Ovary (tissue), 10 donors: ENCODE measurements at regions of chr7 and their contacts with region 1.

Region 1: GRCh38 chr7:104156842-104157277 is 51.0 kb downstream of the ORC5 start:
- DNase-seq: no peak
- H3K4me3 ChIP-seq: no peak overlapping the region
- H3K27ac ChIP-seq: no peak overlapping the region
- H3K4me1 ChIP-seq: no peaks in the 10 kb centered on the region
- H3K27me3 ChIP-seq: no peaks in the 10 kb centered on the region
- CTCF ChIP-seq: no peak
- EP300 ChIP-seq: no peak
- POLR2A ChIP-seq: no peak

Region 2: DNA sequence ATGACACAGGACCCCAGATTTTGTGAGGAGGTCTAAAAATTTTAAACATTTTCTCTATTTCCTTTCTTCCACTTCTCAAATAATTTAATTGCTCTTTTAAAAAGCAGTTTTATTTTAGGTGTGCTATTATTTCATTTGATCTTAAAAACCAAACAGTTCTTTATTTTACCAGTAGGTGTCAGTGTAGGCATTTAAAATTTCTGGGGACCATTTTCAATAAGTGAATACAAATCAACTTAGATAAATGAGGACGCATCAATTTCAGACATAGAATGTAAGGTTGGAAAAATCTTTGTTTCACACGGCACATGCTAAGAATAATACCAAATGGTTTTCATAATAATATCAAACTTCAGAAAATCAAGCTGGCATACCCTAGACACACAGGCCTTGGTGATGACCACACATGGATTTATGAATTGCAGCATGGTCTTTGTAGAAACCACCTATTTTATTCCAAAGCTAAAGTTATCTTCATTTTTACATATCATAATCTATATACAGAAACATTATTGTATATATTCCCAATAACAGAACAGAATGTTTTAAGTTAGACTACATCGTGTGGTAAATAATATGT is 583.3 kb before region 1 on chr7:
- intact Hi-C with region 1: loop called in 1 of 4 experiments (anchors 10 kb)
- DNase-seq: no peak
- H3K4me3 ChIP-seq: no peak overlapping the region
- H3K27ac ChIP-seq: no peak overlapping the region
- H3K4me1 ChIP-seq: no peaks in the 10 kb centered on the region
- H3K27me3 ChIP-seq: no peaks in the 10 kb centered on the region
- CTCF ChIP-seq: no peak
- EP300 ChIP-seq: no peak
- POLR2A ChIP-seq: no peak

Region 3: GRCh38 chr7:104065491-104065890 is 91.4 kb before region 1 on chr7:
- intact Hi-C with region 1: no loop called
- DNase-seq: no peak
- H3K4me3 ChIP-seq: no peak overlapping the region
- H3K27ac ChIP-seq: no peak overlapping the region
- H3K4me1 ChIP-seq: no peaks in the 10 kb centered on the region
- H3K27me3 ChIP-seq: no peaks in the 10 kb centered on the region
- CTCF ChIP-seq: no peak
- EP300 ChIP-seq: no peak
- POLR2A ChIP-seq: no peak